ENCODE measurements at regions of chr7 and their contacts with region 1.

Region 1: DNA sequence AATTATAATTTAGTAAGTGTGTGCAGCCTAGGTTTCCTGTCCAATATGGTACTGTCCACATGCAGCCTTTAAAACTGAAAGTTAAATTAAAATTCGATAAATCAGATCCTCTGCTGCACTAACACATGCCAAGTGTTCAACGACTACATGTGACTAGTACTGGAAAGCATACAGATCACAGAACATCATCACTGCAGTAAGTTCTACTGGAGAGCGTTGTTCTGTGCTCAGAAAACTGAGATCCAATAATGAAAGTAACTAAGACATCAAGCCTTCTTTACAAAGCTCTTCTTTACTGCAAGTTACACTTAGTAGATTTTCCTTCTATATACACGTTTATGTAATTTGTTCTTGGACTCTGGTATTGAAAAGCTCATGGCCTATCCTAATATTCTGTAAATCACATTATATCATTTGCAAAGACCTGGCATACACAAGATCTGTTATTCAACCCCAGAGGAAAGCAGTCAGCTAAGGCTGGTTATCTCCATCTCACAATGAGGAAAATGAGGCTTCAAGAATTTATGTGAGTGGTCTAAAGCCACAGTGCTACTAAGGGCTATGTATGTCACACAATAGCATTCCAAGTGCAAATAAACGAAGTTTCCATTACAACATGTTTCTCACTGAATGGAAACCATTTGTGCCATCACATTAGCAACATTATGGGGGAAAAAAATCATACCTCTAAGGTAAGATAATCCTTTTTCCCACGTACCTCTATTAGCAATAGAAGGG is 77.6 kb downstream of the VPS41 start:
- DNase-seq: no peak
- H3K4me3 ChIP-seq: no peak overlapping the region
- H3K27ac ChIP-seq: no peak overlapping the region
- H3K4me1 ChIP-seq: peaks cover under 1% of the 10 kb centered on the region
- CTCF ChIP-seq: no peak

Region 2: GRCh38 chr7:38881015-38881414 is 49.6 kb after region 1 on chr7:
- CTCF ChIA-PET with region 1: no interaction called
- POLR2A ChIA-PET with region 1: interaction called, 10 read pairs
- intact Hi-C with region 1: no loop called
- DNase-seq: no peak
- H3K4me3 ChIP-seq: no peak overlapping the region
- H3K27ac ChIP-seq: no peak overlapping the region
- H3K4me1 ChIP-seq: peaks cover 11% of the 10 kb centered on the region
- CTCF ChIP-seq: no peak

Measured in OCI-LY7 (cell line).